Heart right ventricle (tissue), 16 donors: ENCODE measurements at regions of chr9 and their contacts with region 1.

Region 1: GRCh38 chr9:133485361-133486260 is 6.7 kb upstream of the SLC2A6 start:
- DNase-seq: no peak
- ATAC-seq: peak in 5 of 8 donors; percentile 3 to 23 (median 8)
- H3K4me3 ChIP-seq: no peak overlapping the region
- H3K27ac ChIP-seq: no peak overlapping the region
- H3K4me1 ChIP-seq: peaks cover 0 to 14% (median 5%) of the 10 kb centered on the region in 9 donors
- H3K27me3 ChIP-seq: peaks cover 0 to 16% (median 0%) of the 10 kb centered on the region in 7 donors
- CTCF ChIP-seq: no peak

Region 2: DNA sequence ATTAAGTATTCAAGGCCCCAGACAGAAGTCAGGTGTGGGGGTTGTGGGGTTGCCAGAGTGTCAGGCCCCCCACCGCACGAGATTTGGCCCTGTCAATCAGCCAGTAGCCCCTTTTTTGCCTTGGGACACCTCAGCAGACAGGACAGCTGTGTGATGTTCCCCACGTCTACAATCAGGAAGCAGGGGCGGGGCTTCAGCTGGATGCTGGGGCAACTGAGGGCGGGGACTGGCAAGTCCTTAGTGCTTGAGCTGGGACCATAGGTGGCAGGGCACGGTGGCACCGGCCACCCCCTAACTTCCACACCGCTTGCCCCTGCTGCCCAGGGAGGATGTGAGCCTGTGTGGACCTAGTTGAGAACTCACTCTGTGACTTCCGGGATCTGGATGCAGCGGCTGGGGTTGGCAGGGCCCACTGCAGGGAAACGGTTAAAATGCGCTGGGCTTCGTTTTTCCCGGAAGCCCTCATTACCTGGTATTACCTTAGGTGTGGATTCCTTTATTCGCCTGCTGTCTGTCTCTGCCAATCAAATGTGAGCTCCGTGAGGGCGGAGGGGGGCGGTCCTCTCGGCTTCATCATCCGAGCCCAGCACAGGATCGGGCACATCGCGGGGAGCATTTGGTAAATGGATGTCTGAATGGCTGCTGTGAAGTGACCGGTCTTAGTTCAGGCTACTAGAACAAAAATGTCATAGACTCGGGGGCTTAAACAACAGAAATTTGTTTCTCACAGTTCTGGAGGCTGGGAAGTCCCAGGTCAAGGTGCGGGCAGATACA is 462.3 kb before region 1 on chr9:
- intact Hi-C with region 1: loop called in 1 of 10 experiments (anchors 10 kb)
- DNase-seq: no peak
- ATAC-seq: peak in 4 of 8 donors; percentile 16 to 53 (median 34)
- H3K4me3 ChIP-seq: no peak overlapping the region
- H3K27ac ChIP-seq: no peak overlapping the region
- H3K4me1 ChIP-seq: peaks cover 0 to 12% (median 4%) of the 10 kb centered on the region in 9 donors
- H3K27me3 ChIP-seq: peaks cover 0 to 7% (median 0%) of the 10 kb centered on the region in 7 donors
- CTCF ChIP-seq: no peak

Region 3: GRCh38 chr9:133335878-133336811 is 149.5 kb before region 1 on chr9 and contains the start of gene SURF6:
- intact Hi-C with region 1: loop called in 3 of 10 experiments (anchors 10 kb)
- DNase-seq: peak; percentile 91
- ATAC-seq: peak; percentile 94 to 96 (median 96)
- H3K4me3 ChIP-seq: peak within 1 kb of the TSS; percentile 69 to 95 (median 82)
- H3K27ac ChIP-seq: peak within 1 kb of the TSS in 9 of 10 donors; percentile 63 to 85 (median 82)
- H3K4me1 ChIP-seq: peaks cover 4 to 56% (median 23%) of the 10 kb centered on the region in 9 donors
- H3K27me3 ChIP-seq: no peaks in the 10 kb centered on the region
- CTCF ChIP-seq: no peak
- total RNA-seq, gene SURF6: 9.1 to 14.2 (median 11.3) TPM

Region 4: DNA sequence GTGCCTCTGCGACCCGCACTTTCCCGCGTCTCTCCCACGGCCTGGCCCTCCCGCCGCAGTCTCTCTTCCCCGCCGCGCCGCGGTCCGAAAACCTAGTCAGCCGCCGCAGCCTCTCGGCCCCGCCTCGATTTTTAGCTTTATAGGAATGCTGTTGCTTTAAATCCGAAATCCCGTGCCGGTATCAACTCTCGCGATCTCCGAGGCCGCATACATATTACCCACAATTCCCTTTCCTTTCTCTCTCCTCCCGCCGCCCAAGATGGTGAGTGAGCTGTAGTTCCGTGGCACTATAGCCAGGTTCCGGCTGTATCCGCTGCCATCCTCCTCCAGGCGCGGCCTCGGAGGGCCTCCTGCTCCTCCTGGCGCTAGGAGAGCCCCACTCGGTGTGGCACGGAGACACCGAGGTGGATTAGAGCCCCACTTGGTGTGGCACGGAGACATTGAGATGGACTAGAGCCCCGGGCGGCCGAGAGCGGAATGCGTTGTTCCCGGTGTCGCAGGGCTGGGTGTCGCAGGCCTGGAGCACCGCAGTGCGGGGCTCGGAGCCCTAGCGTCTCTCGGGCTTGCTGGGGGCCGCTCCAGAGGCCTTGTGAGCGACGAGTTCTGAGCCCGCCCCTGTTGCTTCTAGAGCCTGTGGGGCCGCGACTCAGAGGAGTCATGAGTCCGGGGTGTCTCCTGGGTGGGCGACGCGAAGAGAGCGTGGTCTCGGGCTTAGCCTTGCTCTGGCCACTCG is 137.5 kb before region 1 on chr9 and contains the starts of genes MED22 and RPL7A:
- intact Hi-C with region 1: loop called in 2 of 10 experiments (anchors 10 kb)
- DNase-seq: peak; percentile 91 to 96
- ATAC-seq: peak; percentile 85 to 95 (median 92)
- H3K4me3 ChIP-seq: peak within 1 kb of the TSS; percentile 71 to 100 (median 96)
- H3K27ac ChIP-seq: peak within 1 kb of the TSS; percentile 52 to 99 (median 90)
- H3K4me1 ChIP-seq: peaks cover 5 to 34% (median 30%) of the 10 kb centered on the region in 9 donors
- H3K27me3 ChIP-seq: no peaks in the 10 kb centered on the region
- CTCF ChIP-seq: peak in 2 of 9 donors; percentile 9 to 19
- total RNA-seq, gene MED22: 11.9 to 21.1 (median 17.4) TPM
- total RNA-seq, gene RPL7A: 859 to 1,268 (median 927) TPM

Region 5: DNA sequence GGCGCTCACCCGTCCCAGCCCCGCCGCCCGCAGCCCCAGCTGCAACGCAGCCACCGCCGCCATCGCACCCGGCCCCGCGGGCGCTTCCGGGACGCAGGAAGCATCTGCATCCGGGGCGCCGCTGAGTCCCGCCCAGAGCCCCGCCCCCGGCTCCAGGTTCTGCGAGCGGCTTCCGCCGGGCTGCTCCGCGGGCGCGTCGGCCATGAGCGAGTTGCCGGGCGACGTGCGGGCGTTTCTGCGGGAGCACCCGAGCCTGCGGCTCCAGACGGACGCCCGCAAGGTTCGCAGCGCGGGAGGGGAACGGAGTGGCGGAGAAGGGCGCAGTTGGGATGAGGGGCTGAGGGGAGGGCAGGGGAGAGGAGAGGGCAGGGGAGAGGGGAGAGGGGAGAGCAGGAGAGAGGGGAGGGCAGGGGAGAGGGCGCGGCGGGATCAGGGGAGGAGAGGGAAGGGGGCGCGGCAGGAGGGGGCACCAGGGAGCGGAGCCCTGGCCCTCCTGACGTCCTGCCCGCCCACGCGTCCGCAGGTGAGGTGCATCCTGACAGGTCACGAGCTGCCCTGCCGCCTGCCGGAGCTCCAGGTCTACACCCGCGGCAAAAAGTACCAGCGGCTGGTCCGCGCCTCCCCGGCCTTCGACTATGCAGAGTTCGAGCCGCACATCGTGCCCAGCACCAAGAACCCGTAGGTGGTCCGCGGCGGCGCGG is 129.1 kb before region 1 on chr9 and contains the starts of genes SURF1 and SURF2:
- intact Hi-C with region 1: loop called in 1 of 10 experiments (anchors 1 kb)
- DNase-seq: peak; percentile 88 to 90
- ATAC-seq: peak; percentile 86 to 97 (median 90)
- H3K4me3 ChIP-seq: peak within 1 kb of the TSS; percentile 58 to 97 (median 88)
- H3K27ac ChIP-seq: peak within 1 kb of the TSS; percentile 29 to 93 (median 82)
- H3K4me1 ChIP-seq: peaks cover 7 to 47% (median 31%) of the 10 kb centered on the region in 9 donors
- H3K27me3 ChIP-seq: no peaks in the 10 kb centered on the region
- CTCF ChIP-seq: peak in 1 of 9 donors; percentile 11
- total RNA-seq, gene SURF1: 41.7 to 75.0 (median 58.2) TPM
- total RNA-seq, gene SURF2: 9.7 to 16.0 (median 14.1) TPM

Region 6: GRCh38 chr9:133406480-133407307 is 78.9 kb before region 1 on chr9:
- intact Hi-C with region 1: loop called (anchors 1 to 5 kb)
- DNase-seq: peak; percentile 67 to 75
- ATAC-seq: peak; percentile 63 to 91 (median 82)
- H3K4me3 ChIP-seq: no peak overlapping the region
- H3K27ac ChIP-seq: no peak overlapping the region
- H3K4me1 ChIP-seq: peaks cover 0 to 13% (median 0%) of the 10 kb centered on the region in 9 donors
- H3K27me3 ChIP-seq: no peaks in the 10 kb centered on the region
- CTCF ChIP-seq: peak; percentile 79 to 96 (median 92)

Region 7: DNA sequence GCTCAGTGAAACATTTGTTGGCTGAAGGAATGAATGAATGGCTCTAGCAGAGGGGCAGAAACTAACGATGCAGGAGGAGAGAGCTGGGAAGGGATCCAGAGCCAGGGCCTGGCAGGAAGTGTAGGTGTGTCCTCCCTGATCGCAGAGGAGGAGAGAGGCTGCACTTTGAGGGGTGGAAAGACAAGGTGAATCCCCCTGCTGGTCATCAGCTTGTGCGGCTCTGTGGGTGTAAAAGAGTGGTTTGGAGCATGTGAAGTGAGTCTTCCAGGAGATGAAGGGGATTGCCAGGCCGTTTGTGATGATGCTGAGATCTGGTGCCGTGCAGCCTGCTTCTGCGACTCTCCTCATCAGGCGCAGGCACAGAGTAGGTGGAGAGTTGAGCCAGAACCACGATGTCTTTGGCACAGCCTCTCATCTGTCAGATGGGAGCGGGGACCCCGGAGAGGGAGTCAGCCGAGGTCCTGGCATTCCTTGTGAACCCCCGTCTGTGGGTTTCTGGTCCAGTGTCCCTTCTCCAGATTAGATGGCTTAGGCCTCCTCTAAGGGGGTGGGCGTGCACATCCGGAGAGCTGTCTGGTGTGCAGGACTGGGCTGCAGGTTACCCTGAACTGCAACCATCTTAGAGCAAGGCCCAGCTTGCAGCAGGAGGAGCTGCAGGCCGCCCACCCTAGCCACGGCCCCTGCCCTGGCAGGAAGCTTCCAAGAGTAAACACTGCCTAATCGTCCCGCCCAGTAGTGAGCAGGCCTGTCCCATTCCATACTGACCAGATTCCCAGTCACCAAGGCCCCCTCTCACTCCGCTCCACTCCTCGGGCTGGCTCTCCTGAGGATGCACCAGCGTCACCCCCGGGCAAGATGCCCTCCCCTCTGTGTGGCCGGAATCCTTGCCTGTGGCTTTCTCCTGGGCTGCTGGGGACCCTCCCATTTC is 63.7 kb before region 1 on chr9 and contains the start of gene ADAMTS13:
- intact Hi-C with region 1: no loop called
- DNase-seq: no peak
- ATAC-seq: no peak
- H3K4me3 ChIP-seq: no peak within 1 kb of the TSS
- H3K27ac ChIP-seq: no peak within 1 kb of the TSS
- H3K4me1 ChIP-seq: peaks cover 3 to 17% (median 8%) of the 10 kb centered on the region in 9 donors
- H3K27me3 ChIP-seq: peaks cover 5 to 28% (median 15%) of the 10 kb centered on the region in 7 donors
- CTCF ChIP-seq: no peak
- total RNA-seq, gene ADAMTS13: 2.2 to 4.8 (median 3.5) TPM

Region 8: DNA sequence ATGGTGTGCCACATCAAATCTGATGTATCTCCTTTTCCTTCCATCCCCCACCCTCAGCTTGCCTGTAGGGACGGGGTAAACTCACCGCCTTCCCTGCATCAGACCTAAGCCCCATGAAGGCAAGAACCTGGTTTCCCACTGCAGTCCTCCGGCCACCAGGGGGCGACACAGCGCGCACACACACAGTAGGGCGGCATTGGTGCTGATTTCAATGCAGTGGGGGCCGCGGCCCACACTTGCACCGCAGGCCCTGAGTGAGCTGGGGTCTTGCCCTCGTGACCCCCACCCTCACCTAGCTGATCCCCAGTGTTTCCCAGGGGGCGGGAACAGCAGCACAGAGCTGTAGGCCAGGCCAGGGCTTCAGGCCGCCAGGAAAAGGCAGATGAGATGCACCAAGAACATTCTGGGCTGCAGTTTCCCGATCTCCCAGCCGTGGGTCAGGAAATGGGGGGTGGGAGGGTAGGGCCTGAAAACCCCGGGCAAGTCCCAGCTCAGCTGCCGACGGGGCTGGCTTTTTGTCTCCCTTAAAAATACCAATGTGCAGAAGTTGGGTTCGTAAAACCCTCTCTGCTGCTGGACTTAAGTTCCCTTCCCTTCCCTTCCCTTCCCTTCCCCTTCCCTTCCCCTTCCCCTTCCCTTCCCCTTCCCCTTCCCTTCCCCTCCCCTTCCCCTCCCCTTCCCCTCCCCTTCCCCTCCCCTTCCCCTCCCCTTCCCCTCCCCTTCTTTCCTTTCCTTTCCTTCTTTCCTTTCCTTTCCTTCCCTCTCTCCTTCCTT is 104.0 kb after region 1 on chr9:
- intact Hi-C with region 1: no loop called
- DNase-seq: no peak
- ATAC-seq: no peak
- H3K4me3 ChIP-seq: no peak overlapping the region
- H3K27ac ChIP-seq: no peak overlapping the region
- H3K4me1 ChIP-seq: peaks cover 0 to 17% (median 12%) of the 10 kb centered on the region in 9 donors
- H3K27me3 ChIP-seq: peaks cover 0 to 54% (median 33%) of the 10 kb centered on the region in 7 donors
- CTCF ChIP-seq: peak in 8 of 9 donors; percentile 28 to 61 (median 48)